ENCODE measurements at regions of chr6 and their contacts with region 1.

Region 1: DNA sequence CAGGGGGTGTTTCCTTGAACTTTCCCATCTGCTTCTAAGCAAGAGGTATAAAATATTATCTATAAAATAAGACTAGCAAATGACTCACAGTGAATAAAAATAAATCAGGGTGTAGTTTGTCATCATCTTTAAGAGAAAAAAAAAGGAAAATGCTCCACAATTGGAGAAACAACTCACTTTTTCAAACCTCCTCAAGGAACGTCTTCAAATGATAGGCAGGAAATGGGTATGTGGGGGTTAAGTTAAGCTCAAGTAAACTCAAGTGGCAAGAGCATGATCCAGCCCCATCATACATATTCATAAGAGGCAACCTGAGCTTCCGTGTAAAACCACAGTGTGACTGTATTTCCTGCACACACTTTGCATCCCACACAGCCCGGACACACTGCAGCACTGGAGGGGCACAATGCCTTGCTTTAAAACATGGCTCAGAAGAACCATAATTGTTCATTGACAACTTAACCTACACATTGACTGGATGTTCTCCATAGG is 58.5 kb upstream of the CEP85L start:
- DNase-seq: peak; percentile 85
- ATAC-seq: peak; percentile 89
- H3K4me3 ChIP-seq: peak overlapping the region; percentile 81
- H3K27ac ChIP-seq: peak overlapping the region; percentile 84
- H3K4me1 ChIP-seq: peaks cover 33% of the 10 kb centered on the region
- H3K27me3 ChIP-seq: no peaks in the 10 kb centered on the region
- CTCF ChIP-seq: no peak
- EP300 ChIP-seq: no peak
- POLR2A ChIP-seq: peak; percentile 61
- RAD21 ChIP-seq: no peak

Region 2: GRCh38 chr6:118651282-118652050 is 58.4 kb before region 1 on chr6 and contains the start of gene CEP85L:
- CTCF ChIA-PET with region 1: no interaction called
- POLR2A ChIA-PET with region 1: interaction called, 5 read pairs
- RAD21 ChIA-PET with region 1: interaction called, 5 read pairs
- SMC1A ChIA-PET with region 1: interaction called, 4 read pairs
- in situ Hi-C with region 1: no loop called
- intact Hi-C with region 1: loop called (anchors 2 kb)
- DNase-seq: peak; percentile 34
- ATAC-seq: peak; percentile 94
- H3K4me3 ChIP-seq: peak within 1 kb of the TSS; percentile 92
- H3K27ac ChIP-seq: peak within 1 kb of the TSS; percentile 71
- H3K4me1 ChIP-seq: peaks cover 5% of the 10 kb centered on the region
- H3K27me3 ChIP-seq: no peaks in the 10 kb centered on the region
- CTCF ChIP-seq: no peak
- EP300 ChIP-seq: no peak
- POLR2A ChIP-seq: peak; percentile 90
- RAD21 ChIP-seq: no peak
- polyA plus RNA-seq, gene CEP85L: 1.8 to 3.7 TPM

Region 3: GRCh38 chr6:118697554-118697953 is 12.4 kb before region 1 on chr6:
- CTCF ChIA-PET with region 1: interaction called, 5 read pairs
- POLR2A ChIA-PET with region 1: interaction called, 6 read pairs
- RAD21 ChIA-PET with region 1: no interaction called
- SMC1A ChIA-PET with region 1: interaction called, 10 read pairs
- in situ Hi-C with region 1: no loop called
- intact Hi-C with region 1: no loop called
- DNase-seq: no peak
- ATAC-seq: no peak
- H3K4me3 ChIP-seq: no peak overlapping the region
- H3K27ac ChIP-seq: no peak overlapping the region
- H3K4me1 ChIP-seq: no peaks in the 10 kb centered on the region
- H3K27me3 ChIP-seq: no peaks in the 10 kb centered on the region
- CTCF ChIP-seq: no peak
- EP300 ChIP-seq: no peak
- POLR2A ChIP-seq: no peak
- RAD21 ChIP-seq: no peak

Region 4: GRCh38 chr6:118724211-118724610 is 14.3 kb after region 1 on chr6:
- CTCF ChIA-PET with region 1: interaction called, 4 read pairs
- POLR2A ChIA-PET with region 1: interaction called, 4 read pairs
- RAD21 ChIA-PET with region 1: interaction called, 3 read pairs
- SMC1A ChIA-PET with region 1: interaction called, 10 read pairs
- in situ Hi-C with region 1: no loop called
- intact Hi-C with region 1: no loop called
- DNase-seq: no peak
- ATAC-seq: peak; percentile 88
- H3K4me3 ChIP-seq: no peak overlapping the region
- H3K27ac ChIP-seq: no peak overlapping the region; the same call in 1 of the 2 replicates
- H3K4me1 ChIP-seq: peaks cover 18% of the 10 kb centered on the region
- H3K27me3 ChIP-seq: no peaks in the 10 kb centered on the region
- CTCF ChIP-seq: no peak
- EP300 ChIP-seq: no peak
- POLR2A ChIP-seq: no peak
- RAD21 ChIP-seq: no peak